Panc1 (cell line): ENCODE measurements at regions of chr19 and their contacts with region 1.

Region 1: GRCh38 chr19:39599116-39599515 is 3.2 kb upstream of the LGALS13 start:
- DNase-seq: no peak
- ATAC-seq: no peak
- H3K4me3 ChIP-seq: no peak overlapping the region
- H3K27ac ChIP-seq: no peak overlapping the region
- H3K4me1 ChIP-seq: no peaks in the 10 kb centered on the region
- H3K27me3 ChIP-seq: peaks cover 88% of the 10 kb centered on the region
- CTCF ChIP-seq: 0 out of 2 replicates have a peak, but pooled peaks have one; percentile 1

Region 2: GRCh38 chr19:38812841-38813320 is 786.2 kb before region 1 on chr19 and contains the start of gene LGALS4:
- CTCF ChIA-PET with region 1: interaction called, 13 read pairs
- POLR2A ChIA-PET with region 1: interaction called, 8 read pairs
- in situ Hi-C with region 1: no loop called
- intact Hi-C with region 1: no loop called
- DNase-seq: no peak
- ATAC-seq: peak; percentile 43
- H3K4me3 ChIP-seq: no peak within 1 kb of the TSS
- H3K27ac ChIP-seq: no peak within 1 kb of the TSS; the same call in 1 of the 2 replicates
- H3K4me1 ChIP-seq: peaks cover 4% of the 10 kb centered on the region; the same call in 1 of the 2 replicates
- H3K27me3 ChIP-seq: no peaks in the 10 kb centered on the region
- CTCF ChIP-seq: no peak
- total RNA-seq, gene LGALS4: 3.9 TPM